Left ventricle myocardium superior (tissue), 1 donor: ENCODE measurements at regions of chr1 and their contacts with region 1.

Region 1: GRCh38 chr1:205598841-205599668 is 32.8 kb downstream of the ELK4 start:
- DNase-seq: peak; percentile 78
- ATAC-seq: peak; percentile 91

Region 2: GRCh38 chr1:205650241-205650640 is 51.2 kb after region 1 on chr1:
- intact Hi-C with region 1: loop called (anchors 5 kb)
- DNase-seq: no peak
- ATAC-seq: no peak

Region 3: GRCh38 chr1:205783904-205784303 is 184.8 kb after region 1 on chr1:
- intact Hi-C with region 1: no loop called
- DNase-seq: no peak
- ATAC-seq: peak; percentile 56